AG04449 (cell line): ENCODE measurements at regions of chr21 and their contacts with region 1.

Region 1: DNA sequence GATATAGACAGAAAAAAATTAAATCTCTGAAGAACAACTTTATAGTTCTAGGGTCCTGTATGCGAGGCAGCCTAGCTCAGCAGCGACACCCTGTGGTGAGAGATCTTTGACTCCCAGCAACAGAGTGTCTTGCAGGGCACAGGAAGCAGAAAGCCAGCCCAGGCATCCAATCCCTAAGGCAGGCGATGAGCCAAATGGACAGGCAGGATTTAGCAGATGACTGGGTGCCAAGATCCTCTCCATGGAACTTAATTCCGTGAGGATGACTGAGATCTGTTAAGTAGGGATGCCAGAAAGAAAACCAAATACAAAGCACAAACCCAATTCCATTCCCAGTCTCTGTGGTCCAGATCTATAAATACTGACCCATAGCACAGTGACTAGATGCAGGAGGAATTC is 38.8 kb downstream of the HLCS start:
- DNase-seq: peak; percentile 94
- H3K4me3 ChIP-seq: no peak overlapping the region
- CTCF ChIP-seq: peak; percentile 91

Region 2: DNA sequence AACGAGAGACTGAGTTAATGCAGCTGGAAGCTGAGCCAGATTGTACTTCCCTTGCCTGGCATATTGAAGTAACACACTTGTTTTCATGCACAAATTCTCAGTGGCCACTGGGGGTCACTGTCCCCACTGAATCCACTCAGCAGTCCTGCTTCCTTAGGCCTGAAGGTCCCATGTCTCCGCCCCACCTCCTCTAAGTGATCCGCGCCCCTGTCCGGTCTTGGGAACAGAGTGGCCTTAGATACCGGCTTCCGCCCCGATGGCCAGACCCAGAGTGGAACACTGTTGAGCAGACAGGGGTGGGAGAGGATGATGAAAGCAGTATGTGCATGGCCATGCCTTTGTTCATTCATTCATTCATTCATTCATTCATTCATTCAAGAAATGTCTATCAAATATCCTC is 507.7 kb before region 1 on chr21:
- CTCF ChIA-PET with region 1: interaction called, 12 read pairs
- POLR2A ChIA-PET with region 1: no interaction called
- DNase-seq: peak; percentile 51
- H3K4me3 ChIP-seq: no peak overlapping the region
- CTCF ChIP-seq: peak; percentile 83

Region 3: GRCh38 chr21:36661511-36662309 is 266.0 kb before region 1 on chr21:
- CTCF ChIA-PET with region 1: interaction called, 13 read pairs
- POLR2A ChIA-PET with region 1: no interaction called
- DNase-seq: no peak
- H3K4me3 ChIP-seq: no peak overlapping the region
- CTCF ChIP-seq: peak; percentile 47

Region 4: GRCh38 chr21:36756527-36756926 is 171.2 kb before region 1 on chr21:
- CTCF ChIA-PET with region 1: interaction called, 10 read pairs
- POLR2A ChIA-PET with region 1: no interaction called
- DNase-seq: no peak
- H3K4me3 ChIP-seq: no peak overlapping the region
- CTCF ChIP-seq: no peak

Region 5: DNA sequence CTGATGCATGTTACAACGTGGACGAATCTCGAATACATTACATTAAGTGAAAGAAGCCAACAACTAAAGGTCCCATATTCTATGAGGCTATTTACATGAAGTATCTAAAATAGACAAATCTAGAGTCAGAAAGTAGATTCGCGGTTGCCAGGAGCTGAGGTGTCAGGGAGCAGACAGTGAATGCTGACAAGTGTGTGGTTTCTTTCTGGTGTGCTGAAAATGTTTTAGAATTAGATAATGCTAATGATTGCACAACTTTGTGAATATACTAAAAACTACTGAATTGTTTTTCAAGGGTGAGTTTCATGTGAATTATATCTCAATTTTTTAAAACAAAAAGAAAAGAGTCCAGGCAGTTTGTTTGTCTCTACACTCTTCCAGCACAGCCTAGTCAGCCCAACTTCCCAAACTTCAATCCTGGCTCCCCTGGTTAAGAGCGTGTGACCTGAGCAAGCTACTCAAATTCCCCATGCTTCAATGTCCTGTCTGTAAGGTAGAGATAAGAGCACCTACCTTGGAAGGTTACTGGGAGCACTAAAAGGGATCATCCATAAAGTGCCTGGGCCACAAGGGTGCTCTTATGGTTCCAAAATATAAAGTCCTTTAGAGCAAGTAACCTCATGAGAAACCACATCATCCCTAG is 17.9 kb after region 1 on chr21:
- CTCF ChIA-PET with region 1: interaction called, 17 read pairs
- POLR2A ChIA-PET with region 1: no interaction called
- DNase-seq: no peak
- H3K4me3 ChIP-seq: no peak overlapping the region
- CTCF ChIP-seq: no peak